ENCODE measurements at regions of chr7 and their contacts with region 1.

Region 1: DNA sequence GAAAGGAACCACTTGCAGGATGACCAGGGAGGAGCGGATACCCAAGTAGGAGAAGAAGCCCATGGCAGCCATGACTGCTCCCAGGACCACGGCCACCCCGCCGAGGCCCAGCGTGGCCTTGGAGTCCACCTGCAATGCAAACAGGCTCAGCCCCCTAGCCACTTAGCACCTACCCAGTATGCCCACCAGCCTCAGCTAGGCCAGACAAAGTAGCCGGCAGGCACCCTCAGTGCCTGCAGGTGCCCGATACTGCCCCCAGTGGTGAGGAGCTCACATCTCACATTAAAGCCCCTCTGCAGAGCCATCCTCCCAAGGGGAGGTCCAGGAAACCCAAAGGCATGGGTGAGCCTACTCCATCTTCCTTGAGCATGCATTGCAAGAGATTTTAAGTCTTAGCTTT is 6.6 kb downstream of the NPC1L1 start:
- DNase-seq: peak; percentile 21
- H3K4me3 ChIP-seq: no peak overlapping the region
- H3K27ac ChIP-seq: no peak overlapping the region
- H3K4me1 ChIP-seq: no peaks in the 10 kb centered on the region
- H3K27me3 ChIP-seq: no peaks in the 10 kb centered on the region
- CTCF ChIP-seq: peak; percentile 75 to 81
- POLR2A ChIP-seq: no peak

Region 2: DNA sequence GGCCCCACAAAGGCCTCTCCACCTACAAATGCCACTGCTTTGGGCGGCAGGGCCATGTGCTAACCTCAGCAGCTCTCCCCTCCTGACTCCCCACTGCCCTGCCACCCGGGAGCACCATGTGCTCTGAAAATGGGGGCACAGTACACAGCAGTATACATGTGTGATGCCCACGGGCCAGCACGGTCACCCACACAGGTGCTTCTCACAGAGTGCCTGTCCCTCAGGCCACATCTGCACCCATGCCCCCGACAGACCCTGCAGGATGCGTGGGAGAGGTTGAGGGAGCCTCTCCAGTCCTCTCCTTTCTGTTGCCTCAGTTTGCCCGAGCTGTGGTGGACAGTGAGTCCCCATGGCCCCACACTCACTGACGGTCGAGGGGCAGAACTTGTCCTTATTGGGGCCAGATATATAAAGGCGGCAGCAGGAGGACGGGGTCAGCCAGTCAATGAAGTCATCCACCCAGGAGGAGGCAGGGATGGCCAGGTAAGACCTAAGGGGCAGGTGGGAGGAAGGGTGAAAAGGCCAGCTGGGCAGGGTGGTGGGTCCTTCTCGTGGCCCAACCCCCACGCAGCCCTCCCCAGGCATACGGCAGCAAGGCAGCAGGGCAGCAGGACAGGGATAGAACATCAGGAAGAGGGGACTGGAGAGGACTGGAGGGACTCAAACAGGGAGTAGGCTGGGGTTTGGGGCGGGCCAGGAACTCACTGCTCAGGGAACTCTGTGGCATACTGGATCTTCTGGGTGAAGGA is 13.0 kb before region 1 on chr7:
- CTCF ChIA-PET with region 1: interaction called, 18 read pairs
- POLR2A ChIA-PET with region 1: no interaction called
- dilution Hi-C with region 1: no loop called
- intact Hi-C with region 1: no loop called
- DNase-seq: no peak
- H3K4me3 ChIP-seq: no peak overlapping the region
- H3K27ac ChIP-seq: no peak overlapping the region
- H3K4me1 ChIP-seq: no peaks in the 10 kb centered on the region
- H3K27me3 ChIP-seq: peaks cover 6 to 8% of the 10 kb centered on the region in 2 experiments
- CTCF ChIP-seq: no peak
- POLR2A ChIP-seq: no peak

Measured in endothelial cell of umbilical vein (primary cell).